ENCODE measurements at regions of chr7 and their contacts with region 1.

Region 1: GRCh38 chr7:142188846-142189245 is 69.0 kb downstream of the PRSS58 start:
- DNase-seq: no peak

Region 2: DNA sequence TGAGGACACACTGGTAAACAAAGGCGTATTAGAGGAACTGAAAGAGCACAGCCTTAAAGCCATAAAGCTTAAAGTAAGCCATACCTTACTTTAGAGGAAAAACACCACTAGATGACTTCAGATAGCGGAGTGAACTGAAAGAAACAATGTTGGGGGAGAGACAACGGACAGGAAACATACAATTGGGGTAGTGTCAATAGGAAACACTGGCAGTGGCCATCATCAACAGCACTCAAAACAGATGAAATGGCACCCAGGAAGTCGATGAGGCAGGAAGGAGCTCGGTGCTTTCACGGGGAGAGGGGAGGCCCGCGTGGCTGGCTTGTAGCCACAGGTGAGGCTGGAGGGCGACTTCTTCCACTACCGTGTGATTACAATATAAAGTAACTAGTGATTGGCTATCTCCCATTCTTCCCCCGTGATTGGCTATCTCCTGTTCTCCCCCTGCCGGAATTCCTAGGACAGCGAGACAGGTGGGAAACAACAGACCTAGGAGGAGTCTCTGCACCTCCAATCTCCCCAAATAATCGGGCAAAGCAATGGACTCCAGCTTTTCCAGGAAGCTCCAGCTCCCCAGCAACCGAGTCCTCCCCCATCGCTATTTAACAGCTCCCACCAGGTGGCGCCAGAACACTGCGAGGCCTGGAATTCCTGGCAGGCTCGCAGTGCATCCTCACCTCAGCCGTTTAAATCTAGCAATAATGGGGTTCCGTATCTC is 212.9 kb before region 1 on chr7:
- intact Hi-C with region 1: loop called (anchors 1 kb)
- DNase-seq: peak; percentile 29 to 95 (median 78)

Region 3: DNA sequence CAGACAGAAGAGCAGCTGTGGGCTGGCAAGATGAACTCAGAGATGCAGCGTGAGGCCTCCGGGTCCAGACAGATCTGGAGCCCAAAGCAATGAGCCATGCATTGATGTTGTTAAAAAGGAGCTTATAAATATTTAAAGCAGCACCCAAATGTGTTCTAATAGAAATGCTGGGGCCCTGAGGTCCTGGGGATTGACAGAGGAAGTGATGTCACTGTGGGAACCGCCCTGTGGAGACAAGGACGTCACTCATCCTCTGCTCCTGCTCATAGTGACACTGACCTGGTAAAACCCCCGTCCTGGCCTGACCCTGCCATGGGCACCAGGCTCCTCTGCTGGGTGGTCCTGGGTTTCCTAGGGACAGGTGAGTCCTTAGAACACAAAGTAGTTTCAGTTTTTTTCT is 266.0 kb after region 1 on chr7:
- intact Hi-C with region 1: no loop called
- DNase-seq: no peak

Measured in posterior cingulate gyrus (tissue), 11 donors.